Activated T-helper 1 cell treated with anti-CD3 and anti-CD28 coated beads, Interleukin-12 subunit alpha, Interleukin-12 subunit beta, Interleukin-2, Interleukin-4 antibody, amounts not matched to agents 30 ng/mL and 10 ng/mL and 1 ng/mL, durations not matched to agents 14 hours and 24 hours and 36 hours (primary cell): ENCODE measurements at regions of chr4 and their contacts with region 1.

Region 1: DNA sequence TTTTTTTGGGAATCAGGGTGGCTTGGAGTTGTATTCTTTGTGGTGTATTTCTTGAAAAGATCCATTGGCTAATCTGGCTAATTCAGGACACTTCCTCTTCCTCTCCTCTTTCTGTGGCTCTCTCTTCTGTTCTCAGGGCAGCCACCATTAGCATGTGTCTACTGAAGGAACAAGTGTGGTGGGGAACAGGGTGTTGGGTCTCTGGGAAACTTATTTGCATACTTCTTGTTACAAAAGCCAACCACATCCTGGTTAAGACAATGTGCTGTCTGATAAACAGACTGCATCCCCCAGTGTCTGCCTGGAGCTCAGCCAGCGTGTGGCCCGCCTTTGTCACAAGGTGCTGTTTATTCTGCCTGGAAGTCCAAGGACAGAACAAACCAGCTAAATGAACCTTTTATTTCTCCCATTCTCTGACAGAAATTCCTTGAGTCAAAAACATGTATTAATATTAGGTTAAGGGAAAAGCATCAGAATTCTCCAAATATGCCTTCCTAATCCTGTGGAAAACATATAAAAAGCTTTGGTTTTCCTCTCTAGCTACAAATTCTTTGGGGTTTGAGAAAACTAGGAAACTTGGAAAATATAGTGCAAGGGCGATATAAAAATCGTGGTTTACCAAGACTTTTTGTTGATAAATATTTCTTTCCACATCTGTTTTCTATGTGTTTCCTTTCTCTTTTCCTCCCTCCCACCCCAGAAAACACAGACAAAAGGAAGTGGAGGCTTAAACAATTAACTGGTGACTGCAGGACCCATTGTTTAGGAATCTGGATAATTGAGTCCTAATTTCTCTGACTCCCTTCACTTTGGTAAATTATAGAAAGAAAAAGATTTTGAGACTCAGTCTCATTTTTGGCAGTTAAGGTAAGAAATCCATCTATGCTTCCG is 203.6 kb downstream of the SPRY1 start:
- DNase-seq: peak; percentile 41
- H3K4me3 Mint-ChIP-seq: peak overlapping the region; percentile 25
- H3K27ac Mint-ChIP-seq: peak overlapping the region; percentile 75
- H3K4me1 Mint-ChIP-seq: peaks cover 50% of the 10 kb centered on the region
- H3K27me3 Mint-ChIP-seq: no peaks in the 10 kb centered on the region

Region 2: DNA sequence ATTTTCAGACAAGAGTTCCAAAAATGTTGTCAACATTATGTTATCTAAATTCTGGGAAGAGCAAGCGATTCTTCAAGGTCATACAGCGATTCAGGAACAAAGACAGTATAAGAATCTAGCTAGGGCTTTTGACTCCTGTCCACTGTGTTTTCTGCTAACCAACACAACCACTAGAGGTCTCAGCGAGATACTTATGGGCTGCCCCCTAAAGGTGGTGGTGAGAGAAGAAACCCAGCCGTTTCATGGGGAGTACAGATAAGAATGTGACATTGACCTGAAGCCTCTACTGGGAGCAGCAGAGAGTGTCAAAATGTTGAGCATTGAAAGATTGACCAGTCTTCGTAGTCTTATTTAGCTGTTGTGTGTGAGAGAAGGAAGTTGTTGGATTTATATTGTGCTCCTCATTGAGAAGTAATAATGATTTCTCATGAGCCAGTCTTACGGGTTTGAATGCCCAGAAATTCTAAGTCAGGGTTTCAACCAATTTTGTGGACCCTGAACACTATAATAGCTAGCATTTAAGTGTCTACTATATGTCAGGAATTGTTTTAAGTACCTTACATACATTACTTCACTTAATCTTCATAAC is 35.3 kb before region 1 on chr4:
- intact Hi-C with region 1: loop called (anchors 5 kb)
- DNase-seq: peak; percentile 57
- H3K4me3 Mint-ChIP-seq: no peak overlapping the region
- H3K27ac Mint-ChIP-seq: no peak overlapping the region
- H3K4me1 Mint-ChIP-seq: peaks cover 7% of the 10 kb centered on the region
- H3K27me3 Mint-ChIP-seq: peaks cover 22% of the 10 kb centered on the region